B cell (primary cell): ENCODE measurements at regions of chr20 and their contacts with region 1.

Region 1: GRCh38 chr20:63520504-63520933 is at the start of gene PPDPF:
- DNase-seq: peak; percentile 92
- ATAC-seq: peak; percentile 81
- H3K4me3 ChIP-seq: peak within 1 kb of the TSS; percentile 21 to 79 (median 74)
- H3K4me3 Mint-ChIP-seq: peak within 1 kb of the TSS; percentile 86
- H3K27ac ChIP-seq: peak within 1 kb of the TSS; percentile 63 to 76
- H3K27ac Mint-ChIP-seq: peak within 1 kb of the TSS; percentile 90
- H3K4me1 ChIP-seq: peaks cover 16 to 23% of the 10 kb centered on the region in 2 donors
- H3K4me1 Mint-ChIP-seq: peaks cover 31% of the 10 kb centered on the region
- H3K27me3 ChIP-seq: peaks cover 0 to 10% (median 3%) of the 10 kb centered on the region in 4 experiments
- H3K27me3 Mint-ChIP-seq: peaks cover 4% of the 10 kb centered on the region
- CTCF ChIP-seq: no peak
- total RNA-seq, gene PPDPF: 149 and 162 TPM in 2 replicates

Region 2: GRCh38 chr20:62907384-62908317 is 612.9 kb before region 1 on chr20:
- CTCF ChIA-PET with region 1: no interaction called
- POLR2A ChIA-PET with region 1: no interaction called
- intact Hi-C with region 1: no loop called
- DNase-seq: peak; percentile 54
- ATAC-seq: peak; percentile 67
- H3K4me3 ChIP-seq: no peak overlapping the region
- H3K4me3 Mint-ChIP-seq: no peak overlapping the region
- H3K27ac ChIP-seq: no peak overlapping the region
- H3K27ac Mint-ChIP-seq: peak overlapping the region; percentile 20
- H3K4me1 ChIP-seq: no peaks in the 10 kb centered on the region
- H3K4me1 Mint-ChIP-seq: peaks cover 3% of the 10 kb centered on the region
- H3K27me3 ChIP-seq: no peaks in the 10 kb centered on the region
- H3K27me3 Mint-ChIP-seq: no peaks in the 10 kb centered on the region
- CTCF ChIP-seq: peak; percentile 82

Region 3: DNA sequence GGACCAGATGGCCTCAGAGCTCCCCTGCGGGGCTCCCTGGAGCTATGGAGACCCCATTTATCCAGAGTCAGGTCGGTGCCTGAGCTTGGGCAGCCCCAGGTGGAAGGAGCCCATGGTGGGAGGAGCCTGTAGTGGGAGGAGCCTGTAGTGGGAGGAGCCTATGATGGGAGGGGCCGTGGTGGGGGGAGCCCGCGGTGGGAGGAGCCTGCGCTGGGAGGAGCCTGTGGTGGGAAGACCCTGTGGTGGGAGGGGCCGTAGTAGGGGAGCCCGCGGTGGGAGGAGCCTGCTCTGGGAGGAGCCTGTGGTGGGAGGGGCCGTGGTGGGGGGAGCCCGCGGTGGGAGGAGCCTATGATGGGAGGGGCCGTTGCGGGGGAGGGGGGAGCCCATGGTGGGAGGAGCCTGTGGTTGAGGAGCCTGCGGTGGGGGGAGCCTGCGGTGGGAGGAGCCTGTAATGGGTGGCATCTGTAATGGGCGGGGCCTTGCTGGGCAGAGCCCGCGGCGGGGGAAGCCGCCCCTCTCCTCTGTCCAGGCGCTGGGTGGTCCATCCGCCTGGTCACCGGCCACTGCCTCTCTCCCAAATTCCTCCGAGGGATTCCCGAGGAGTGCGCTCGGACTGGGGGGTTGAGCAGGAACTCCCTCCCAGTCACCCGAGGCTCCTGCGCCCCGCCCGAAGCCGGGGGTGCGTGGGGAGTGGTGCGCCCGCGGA is 32.9 kb after region 1 on chr20:
- CTCF ChIA-PET with region 1: no interaction called
- POLR2A ChIA-PET with region 1: interaction called, 6 read pairs
- intact Hi-C with region 1: loop called (anchors 2 kb)
- DNase-seq: peak; percentile 96
- ATAC-seq: peak; percentile 75
- H3K4me3 ChIP-seq: peak overlapping the region; percentile 7 to 89 (median 75)
- H3K4me3 Mint-ChIP-seq: peak overlapping the region; percentile 86
- H3K27ac ChIP-seq: peak overlapping the region; percentile 79 to 88
- H3K27ac Mint-ChIP-seq: peak overlapping the region; percentile 89
- H3K4me1 ChIP-seq: peaks cover 36 to 50% of the 10 kb centered on the region in 2 donors
- H3K4me1 Mint-ChIP-seq: peaks cover 50% of the 10 kb centered on the region
- H3K27me3 ChIP-seq: peaks cover 0 to 5% (median under 1%) of the 10 kb centered on the region in 4 experiments
- H3K27me3 Mint-ChIP-seq: no peaks in the 10 kb centered on the region
- CTCF ChIP-seq: no peak

Region 4: GRCh38 chr20:63641792-63642544 is 121.4 kb after region 1 on chr20:
- CTCF ChIA-PET with region 1: interaction called, 3 read pairs
- POLR2A ChIA-PET with region 1: interaction called, 13 read pairs
- intact Hi-C with region 1: no loop called
- DNase-seq: peak; percentile 96
- ATAC-seq: peak; percentile 72
- H3K4me3 ChIP-seq: peak overlapping the region in 4 of 5 experiments; percentile 84 to 97 (median 90)
- H3K4me3 Mint-ChIP-seq: peak overlapping the region; percentile 82
- H3K27ac ChIP-seq: peak overlapping the region; percentile 91
- H3K27ac Mint-ChIP-seq: peak overlapping the region; percentile 97
- H3K4me1 ChIP-seq: peaks cover 23 to 41% of the 10 kb centered on the region in 2 donors
- H3K4me1 Mint-ChIP-seq: peaks cover 28% of the 10 kb centered on the region
- H3K27me3 ChIP-seq: no peaks in the 10 kb centered on the region
- H3K27me3 Mint-ChIP-seq: peaks cover 4% of the 10 kb centered on the region
- CTCF ChIP-seq: peak; percentile 67

Region 5: DNA sequence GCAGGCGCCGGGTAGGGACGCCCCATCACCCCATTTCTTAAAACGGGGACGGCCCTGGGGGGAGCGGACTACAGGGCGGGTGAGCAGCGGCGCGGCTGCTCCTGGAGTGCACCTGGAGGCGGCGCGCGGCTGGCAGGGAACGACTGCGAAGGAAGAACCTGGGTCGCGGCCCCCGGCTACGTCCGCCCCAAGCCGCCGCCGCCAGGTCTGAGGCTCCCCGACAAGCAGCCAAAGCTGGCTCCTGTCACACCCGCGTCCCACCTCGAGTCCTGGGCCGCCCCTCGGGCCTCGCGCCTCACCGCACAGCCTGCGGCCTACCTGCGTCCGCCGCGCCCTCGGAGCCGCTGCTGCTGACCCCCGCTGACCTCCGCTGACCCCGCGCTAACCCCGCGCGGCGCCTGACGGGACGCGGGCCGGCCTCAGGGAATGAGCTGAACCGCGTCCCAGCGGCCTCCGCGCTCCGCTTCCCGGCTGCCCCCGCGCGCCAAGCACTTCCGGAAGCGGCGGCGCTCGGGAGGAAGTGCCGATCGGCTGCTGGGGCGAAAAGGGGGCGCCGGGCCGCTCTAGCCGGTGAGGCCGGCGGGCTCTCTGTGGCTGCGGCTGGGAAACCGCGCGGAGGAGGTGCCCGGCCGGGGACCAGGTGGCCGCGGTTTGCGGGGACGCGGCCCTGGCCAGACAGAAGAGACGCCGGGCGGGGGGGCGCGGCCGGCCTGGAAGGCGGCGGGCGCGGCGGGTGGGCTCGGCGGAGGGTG is 187.2 kb after region 1 on chr20 and contains the starts of genes ARFRP1 and ZGPAT:
- CTCF ChIA-PET with region 1: no interaction called
- POLR2A ChIA-PET with region 1: no interaction called
- intact Hi-C with region 1: loop called (anchors 1 kb)
- DNase-seq: peak; percentile 92
- ATAC-seq: peak; percentile 96
- H3K4me3 ChIP-seq: peak within 1 kb of the TSS in 4 of 5 experiments; percentile 63 to 80 (median 67)
- H3K4me3 Mint-ChIP-seq: peak within 1 kb of the TSS; percentile 87
- H3K27ac ChIP-seq: peak within 1 kb of the TSS; percentile 63 to 85
- H3K27ac Mint-ChIP-seq: peak within 1 kb of the TSS; percentile 86
- H3K4me1 ChIP-seq: peaks cover 21 to 28% of the 10 kb centered on the region in 2 donors
- H3K4me1 Mint-ChIP-seq: peaks cover 38% of the 10 kb centered on the region
- H3K27me3 ChIP-seq: no peaks in the 10 kb centered on the region
- H3K27me3 Mint-ChIP-seq: no peaks in the 10 kb centered on the region
- CTCF ChIP-seq: no peak
- total RNA-seq, gene ARFRP1: 73.3 and 75.5 TPM in 2 replicates
- total RNA-seq, gene ZGPAT: 46.1 and 47.5 TPM in 2 replicates